GM10248 (cell line): ENCODE measurements at regions of chr2 and their contacts with region 1.

Region 1: DNA sequence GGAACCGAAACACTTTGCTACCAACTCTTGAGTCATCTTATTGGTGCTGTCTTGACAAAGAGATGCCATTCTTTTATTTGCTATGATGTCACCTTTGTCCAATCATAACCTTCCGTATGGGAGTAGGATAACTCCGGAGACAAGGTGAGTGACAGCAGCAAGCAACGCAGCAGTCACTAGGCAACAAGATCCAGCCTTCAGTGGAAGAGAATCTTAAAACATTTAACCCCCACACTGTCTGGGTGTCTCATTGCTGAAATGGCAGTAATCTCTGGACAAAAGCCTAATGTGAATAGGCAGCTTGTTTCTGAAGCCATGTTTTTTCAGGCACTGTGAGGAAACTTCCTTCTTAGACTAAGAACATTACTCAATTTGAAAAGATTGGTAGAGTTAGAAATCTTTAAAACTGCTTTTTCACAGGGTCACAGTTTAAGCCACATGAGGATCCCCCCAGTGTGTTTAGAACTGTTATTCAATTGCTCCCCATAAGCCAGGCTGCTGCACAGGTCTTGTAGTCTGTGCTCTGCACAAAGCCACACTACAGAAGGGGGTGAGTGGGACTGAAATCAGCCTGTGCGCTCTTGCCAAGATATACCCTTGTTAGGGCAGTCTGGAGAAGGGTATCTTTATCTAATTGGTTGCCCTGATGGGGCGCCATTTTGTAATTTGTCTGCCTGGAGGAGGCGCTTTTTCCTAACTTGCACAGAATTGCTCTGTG is 131.5 kb upstream of the STON1 start:
- DNase-seq: no peak
- CTCF ChIP-seq: no peak

Region 2: DNA sequence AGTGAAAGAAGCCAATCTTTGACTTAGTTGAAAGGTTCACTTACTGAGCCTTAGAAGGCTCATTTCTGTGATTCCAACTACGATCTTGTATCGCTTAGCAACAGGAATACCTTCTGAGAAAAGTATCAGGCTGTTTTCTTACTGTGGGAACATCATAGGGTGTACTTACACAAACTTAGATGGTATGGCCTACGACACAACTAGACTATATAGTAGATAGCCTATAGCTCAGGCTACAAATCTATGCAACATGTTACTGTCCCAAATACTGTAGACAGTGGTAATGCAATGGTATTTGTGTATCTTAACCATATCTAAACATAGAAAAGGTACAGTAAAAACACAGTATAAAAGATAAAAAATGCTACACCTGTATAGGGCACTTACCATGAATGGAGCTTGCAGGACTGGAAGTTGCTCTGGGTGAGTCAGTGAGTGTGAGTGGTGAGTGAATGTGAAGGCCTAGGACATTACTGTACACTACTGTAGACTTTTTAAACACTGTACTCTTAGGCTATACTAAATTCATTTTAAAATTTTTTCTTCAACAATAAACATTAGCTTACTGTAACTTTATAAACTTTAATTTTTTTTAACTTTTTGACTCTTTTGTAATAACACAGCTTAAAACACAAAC is 17.3 kb before region 1 on chr2:
- CTCF ChIA-PET with region 1: no interaction called
- POLR2A ChIA-PET with region 1: no interaction called
- DNase-seq: no peak
- CTCF ChIP-seq: no peak

Region 3: DNA sequence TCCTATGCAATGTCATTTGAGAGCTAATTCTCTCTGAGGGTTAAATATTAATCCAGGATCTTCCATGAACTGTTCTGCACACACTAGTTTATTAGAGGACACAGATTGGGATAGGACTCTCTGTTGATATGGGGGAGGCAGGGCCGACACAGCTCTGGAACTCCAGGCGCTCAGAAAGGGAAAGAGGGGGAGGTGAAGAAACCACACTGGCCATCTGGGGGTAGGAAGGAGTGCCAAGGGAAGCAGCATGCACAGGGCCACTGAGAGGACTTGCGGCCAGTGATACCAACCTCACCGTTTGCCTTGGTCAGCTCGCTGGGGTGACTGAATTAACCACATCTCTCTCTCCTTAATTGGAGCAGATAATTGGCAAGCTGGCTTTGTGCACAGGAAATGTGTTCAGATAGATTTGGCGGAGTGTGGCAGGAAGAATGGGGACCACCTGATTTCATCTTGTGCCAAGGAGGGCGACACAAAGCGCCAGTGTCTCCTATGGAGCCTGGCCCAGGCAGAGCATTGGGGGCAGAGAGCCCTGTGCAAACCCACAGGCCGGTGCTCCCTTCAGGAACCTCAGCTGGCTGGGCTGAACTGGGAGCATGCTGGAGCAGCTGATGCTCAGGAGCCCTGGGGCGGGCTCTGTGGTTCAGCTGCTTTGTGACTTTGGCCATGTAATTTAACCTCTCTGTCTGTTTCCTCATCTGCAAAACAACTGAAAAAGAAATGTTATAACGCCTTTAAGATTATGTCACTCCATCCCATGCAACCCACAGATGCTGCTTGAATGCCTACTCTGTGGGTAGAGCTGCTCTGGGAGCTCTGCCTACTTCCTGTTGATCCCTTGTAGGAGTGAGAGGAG is 16.8 kb after region 1 on chr2:
- CTCF ChIA-PET with region 1: interaction called, 11 read pairs
- POLR2A ChIA-PET with region 1: no interaction called
- DNase-seq: no peak
- CTCF ChIP-seq: no peak

Region 4: GRCh38 chr2:48471048-48471474 is 72.6 kb after region 1 on chr2:
- CTCF ChIA-PET with region 1: no interaction called
- POLR2A ChIA-PET with region 1: no interaction called
- DNase-seq: no peak
- CTCF ChIP-seq: no peak

Region 5: GRCh38 chr2:48600204-48600813 is 201.9 kb after region 1 on chr2:
- CTCF ChIA-PET with region 1: no interaction called
- POLR2A ChIA-PET with region 1: no interaction called
- DNase-seq: peak; percentile 26
- CTCF ChIP-seq: peak; percentile 69